Right cardiac atrium (tissue), 5 donors: ENCODE measurements at regions of chr17 and their contacts with region 1.

Region 1: DNA sequence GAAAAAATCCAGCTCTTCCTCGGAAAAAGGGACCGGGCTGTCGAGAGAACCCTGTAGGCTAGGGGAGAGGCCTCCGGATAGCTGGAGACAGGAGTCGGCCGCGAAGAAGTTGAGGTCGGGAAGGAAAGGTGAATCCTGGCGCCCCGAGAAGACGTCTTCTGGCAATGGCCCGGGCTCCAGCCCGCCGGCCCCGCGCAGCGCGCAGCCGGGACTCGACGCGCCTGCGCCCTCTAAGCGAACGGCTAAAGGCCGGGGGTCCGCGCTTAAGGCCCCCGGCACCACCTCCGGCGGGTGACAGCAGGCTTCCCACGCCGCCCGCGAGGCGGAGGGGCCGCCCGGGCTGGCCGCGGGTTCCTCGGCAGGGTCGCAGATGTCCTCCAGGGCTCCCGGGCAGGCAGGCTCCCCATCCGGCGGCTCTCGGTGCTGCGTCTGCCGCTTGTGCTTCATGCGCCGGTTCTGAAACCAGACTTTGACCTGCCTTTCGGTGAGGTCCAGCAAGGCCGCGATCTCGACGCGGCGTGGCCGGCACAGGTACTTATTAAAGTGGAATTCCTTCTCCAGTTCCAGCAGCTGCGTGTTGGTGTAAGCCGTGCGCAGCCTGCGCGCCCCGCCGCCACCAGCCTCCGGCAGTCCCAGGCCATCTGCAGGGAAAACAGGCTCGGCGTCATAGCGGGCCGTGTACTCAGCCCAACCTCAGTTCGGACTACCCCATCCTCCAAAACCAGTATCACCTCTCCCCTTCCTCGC is 1.6 kb downstream of the HOXB2 start:
- DNase-seq: peak; percentile 47 to 75 (median 70)
- ATAC-seq: peak; percentile 17 to 51
- H3K4me3 ChIP-seq: peak overlapping the region; percentile 77
- H3K27ac ChIP-seq: peak overlapping the region; percentile 76
- H3K4me1 ChIP-seq: peaks cover 3% of the 10 kb centered on the region
- H3K27me3 ChIP-seq: no peaks in the 10 kb centered on the region

Region 2: DNA sequence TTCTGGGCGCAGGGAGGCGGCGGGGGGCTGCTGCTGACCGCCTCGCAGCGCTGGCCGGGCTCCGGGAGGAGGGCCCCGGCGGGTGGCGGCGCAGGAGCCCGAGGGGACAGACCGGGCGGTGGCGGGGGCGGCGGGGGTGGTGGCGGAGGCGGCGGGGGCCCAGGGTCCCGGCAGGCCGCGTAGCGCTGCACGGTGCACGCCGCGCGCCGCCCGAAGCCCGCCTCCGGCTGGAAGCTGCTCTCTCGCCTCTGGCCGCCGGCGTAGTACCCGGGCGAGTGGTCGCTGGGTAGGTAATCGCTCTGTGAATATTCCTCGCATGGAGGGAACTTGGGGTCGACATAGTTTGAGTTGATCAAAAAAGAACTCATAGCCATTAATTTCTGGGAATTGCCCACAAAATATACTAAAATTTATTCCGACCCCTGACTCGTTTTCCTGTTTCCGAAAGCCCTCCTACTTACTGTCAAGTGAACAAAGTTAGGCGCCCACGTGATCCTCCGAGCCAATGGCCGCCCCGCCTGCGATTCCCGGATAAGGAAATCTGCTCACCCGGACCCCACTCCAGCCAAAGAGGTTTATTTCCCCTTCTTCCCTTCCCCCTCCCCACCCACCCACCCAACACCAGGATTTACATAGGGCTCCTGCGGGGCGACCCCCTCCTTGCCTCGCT is 34.8 kb after region 1 on chr17 and contains the start of gene HOXB4:
- intact Hi-C with region 1: loop called in 1 of 4 experiments (anchors 5 kb)
- DNase-seq: peak; percentile 69 to 88 (median 85)
- ATAC-seq: peak; percentile 54 to 58
- H3K4me3 ChIP-seq: peak within 1 kb of the TSS; percentile 78
- H3K27ac ChIP-seq: peak within 1 kb of the TSS; percentile 77
- H3K4me1 ChIP-seq: no peaks in the 10 kb centered on the region
- H3K27me3 ChIP-seq: no peaks in the 10 kb centered on the region
- total RNA-seq, gene HOXB4: 0.38 to 1.1 (median 0.52) TPM